ENCODE measurements at regions of chr6 and their contacts with region 1.

Region 1: GRCh38 chr6:31541658-31542521 is at the start of gene DDX39B:
- DNase-seq: peak; percentile 96 to 98
- ATAC-seq: peak; percentile 93 to 94 (median 94)
- H3K4me3 ChIP-seq: peak within 1 kb of the TSS; percentile 88
- H3K27ac ChIP-seq: peak within 1 kb of the TSS; percentile 92
- H3K4me1 ChIP-seq: peaks cover 29% of the 10 kb centered on the region
- H3K27me3 ChIP-seq: no peaks in the 10 kb centered on the region
- CTCF ChIP-seq: no peak
- total RNA-seq, gene DDX39B: 141 to 186 (median 165) TPM

Region 2: GRCh38 chr6:31493875-31494694 is 47.8 kb before region 1 on chr6:
- intact Hi-C with region 1: loop called in 1 of 2 experiments (anchors 5 kb)
- DNase-seq: peak; percentile 80 to 85
- ATAC-seq: peak; percentile 77 to 88 (median 86)
- H3K4me3 ChIP-seq: peak overlapping the region; percentile 67
- H3K27ac ChIP-seq: no peak overlapping the region
- H3K4me1 ChIP-seq: peaks cover 2% of the 10 kb centered on the region
- H3K27me3 ChIP-seq: peaks cover 0 to 51% (median 8%) of the 10 kb centered on the region in 3 donors
- CTCF ChIP-seq: peak; percentile 64

Region 3: DNA sequence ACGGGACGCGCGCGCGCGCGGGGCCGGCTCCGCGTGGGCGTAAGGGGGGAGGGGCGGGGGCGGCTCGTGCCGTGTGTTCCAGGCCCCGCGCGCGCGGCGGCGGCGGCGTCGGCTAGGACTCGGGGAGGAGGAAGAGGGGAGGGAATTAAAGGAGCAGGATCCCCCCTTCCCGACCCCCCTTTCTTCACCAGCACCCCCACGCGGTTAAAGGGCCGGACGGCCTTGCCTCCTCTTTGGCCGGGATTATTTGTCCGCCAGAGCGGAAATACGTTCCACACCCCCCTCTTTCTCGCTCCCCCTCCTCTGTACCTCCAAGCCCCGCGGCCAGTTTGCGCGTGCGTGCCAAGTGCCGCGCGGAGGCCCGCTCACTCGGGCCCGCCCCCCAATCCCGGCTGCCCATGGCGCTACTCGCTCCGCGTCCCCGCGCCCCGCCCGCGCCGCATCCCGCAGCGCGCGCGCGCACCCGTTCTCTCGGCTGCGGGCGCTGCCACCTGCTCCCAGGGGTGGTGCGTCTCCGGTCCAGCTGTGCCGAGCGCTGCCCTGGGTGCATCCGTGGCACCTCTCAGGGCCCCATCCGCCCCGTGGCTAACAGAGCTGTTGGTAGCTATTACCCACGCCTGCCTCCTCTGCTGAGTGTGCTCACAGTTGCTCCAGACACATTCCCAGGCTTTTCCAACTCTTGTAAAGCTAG is 360.2 kb after region 1 on chr6 and contains the start of gene ZBTB12:
- intact Hi-C with region 1: loop called in 1 of 2 experiments (anchors 10 kb)
- DNase-seq: peak; percentile 91 to 93
- ATAC-seq: peak; percentile 75 to 81 (median 78)
- H3K4me3 ChIP-seq: peak within 1 kb of the TSS; percentile 75
- H3K27ac ChIP-seq: peak within 1 kb of the TSS; percentile 75
- H3K4me1 ChIP-seq: peaks cover 19% of the 10 kb centered on the region
- H3K27me3 ChIP-seq: no peaks in the 10 kb centered on the region
- CTCF ChIP-seq: no peak
- total RNA-seq, gene ZBTB12: 1.1 to 2.6 (median 1.8) TPM

Region 4: GRCh38 chr6:31969712-31970603 is 428.1 kb after region 1 on chr6:
- intact Hi-C with region 1: loop called in 1 of 2 experiments (anchors 10 kb)
- DNase-seq: no peak
- ATAC-seq: no peak
- H3K4me3 ChIP-seq: peak overlapping the region; percentile 95
- H3K27ac ChIP-seq: peak overlapping the region; percentile 96
- H3K4me1 ChIP-seq: peaks cover 19% of the 10 kb centered on the region
- H3K27me3 ChIP-seq: no peaks in the 10 kb centered on the region
- CTCF ChIP-seq: no peak

Measured in psoas muscle (tissue), 8 donors.